ENCODE measurements at regions of chr12 and their contacts with region 1.

Region 1: DNA sequence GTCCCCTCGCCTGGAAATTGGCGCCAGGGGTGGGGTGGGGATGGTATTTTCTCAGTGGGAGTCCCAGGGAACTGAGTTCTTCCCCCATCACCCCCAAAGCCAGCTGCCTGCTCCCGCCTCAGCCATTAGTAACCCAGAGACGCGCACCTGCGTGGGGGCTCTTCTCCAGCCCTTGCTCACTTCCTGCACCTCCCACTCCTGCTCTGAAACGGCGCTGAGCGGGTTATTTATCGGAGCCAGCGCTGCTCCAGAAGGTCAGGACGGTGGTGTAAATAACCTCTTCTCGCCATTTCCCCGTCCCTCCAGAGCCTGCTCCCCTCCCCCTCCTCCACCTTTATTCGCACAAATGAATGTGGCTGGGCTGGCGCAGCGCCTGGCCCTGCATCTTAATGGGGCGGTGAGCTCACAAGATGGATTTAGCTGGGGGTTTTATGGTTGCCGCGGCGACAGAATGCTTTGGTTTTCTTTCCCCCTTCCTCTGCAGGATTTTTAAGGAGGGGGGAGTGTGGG is 12.2 kb downstream of the GPR84 start:
- DNase-seq: no peak
- H3K4me3 ChIP-seq: peak overlapping the region; percentile 10; the same call in 1 of the 2 replicates
- H3K27me3 ChIP-seq: no peaks in the 10 kb centered on the region
- CTCF ChIP-seq: no peak

Region 2: GRCh38 chr12:54068418-54069070 is 283.5 kb before region 1 on chr12:
- CTCF ChIA-PET with region 1: no interaction called
- POLR2A ChIA-PET with region 1: no interaction called
- DNase-seq: no peak
- H3K4me3 ChIP-seq: no peak overlapping the region
- H3K27me3 ChIP-seq: no peaks in the 10 kb centered on the region; the same call in 1 of the 2 replicates
- CTCF ChIP-seq: no peak

Region 3: DNA sequence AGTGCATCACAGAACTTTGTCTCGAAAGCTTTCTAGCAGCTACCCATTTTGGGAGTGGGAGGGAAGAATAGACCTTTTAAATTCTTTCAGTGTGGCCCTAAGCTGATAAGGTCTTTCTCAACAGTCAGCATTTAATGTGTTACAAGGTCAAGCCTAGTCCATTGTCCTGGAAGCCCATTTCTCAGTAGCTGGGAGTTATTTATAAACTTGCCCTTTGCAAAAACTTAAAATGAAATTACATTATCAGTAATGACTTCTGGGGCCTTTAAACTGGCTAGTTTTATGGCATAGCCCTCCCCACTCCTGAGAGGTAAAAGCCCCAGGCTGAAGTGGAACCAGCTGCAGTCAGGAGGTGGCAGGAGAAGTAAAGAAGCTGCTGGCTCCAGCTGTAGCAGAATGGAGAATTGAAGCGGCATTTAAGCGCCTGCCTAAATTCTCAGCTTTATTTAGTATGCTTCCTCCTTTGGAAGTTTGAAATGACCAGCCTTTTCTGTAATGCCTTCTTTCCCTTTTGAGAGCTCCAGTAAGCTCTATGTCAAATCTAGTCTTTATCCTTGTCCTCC is 14.7 kb before region 1 on chr12:
- CTCF ChIA-PET with region 1: interaction called, 114 read pairs
- POLR2A ChIA-PET with region 1: no interaction called
- DNase-seq: no peak
- H3K4me3 ChIP-seq: no peak overlapping the region
- H3K27me3 ChIP-seq: no peaks in the 10 kb centered on the region
- CTCF ChIP-seq: peak; percentile 31; the same call in 1 of the 2 replicates